ENCODE measurements at regions of chr12 and their contacts with region 1.

Region 1: GRCh38 chr12:47686645-47687240 is 19.1 kb downstream of the RPAP3 start:
- DNase-seq: peak; percentile 55
- ATAC-seq: no peak
- H3K4me3 ChIP-seq: no peak overlapping the region
- H3K27ac ChIP-seq: no peak overlapping the region
- H3K4me1 ChIP-seq: no peaks in the 10 kb centered on the region
- H3K27me3 ChIP-seq: no peaks in the 10 kb centered on the region
- CTCF ChIP-seq: peak; percentile 72

Region 2: GRCh38 chr12:47547085-47547484 is 139.7 kb before region 1 on chr12:
- CTCF ChIA-PET with region 1: interaction called, 3 read pairs
- POLR2A ChIA-PET with region 1: no interaction called
- intact Hi-C with region 1: loop called (anchors 1 kb)
- DNase-seq: peak; percentile 70
- ATAC-seq: peak; percentile 73
- H3K4me3 ChIP-seq: no peak overlapping the region
- H3K27ac ChIP-seq: no peak overlapping the region
- H3K4me1 ChIP-seq: peaks cover 8% of the 10 kb centered on the region; the same call in 1 of the 2 replicates
- H3K27me3 ChIP-seq: peaks cover 18% of the 10 kb centered on the region
- CTCF ChIP-seq: peak; percentile 77

Region 3: GRCh38 chr12:47651368-47652254 is 35.1 kb before region 1 on chr12:
- CTCF ChIA-PET with region 1: interaction called, 10 read pairs
- POLR2A ChIA-PET with region 1: no interaction called
- intact Hi-C with region 1: loop called (anchors 1 kb)
- DNase-seq: peak; percentile 82
- ATAC-seq: peak; percentile 79
- H3K4me3 ChIP-seq: peak overlapping the region; percentile 61
- H3K27ac ChIP-seq: no peak overlapping the region
- H3K4me1 ChIP-seq: peaks cover 15% of the 10 kb centered on the region
- H3K27me3 ChIP-seq: no peaks in the 10 kb centered on the region
- CTCF ChIP-seq: peak; percentile 71

Region 4: DNA sequence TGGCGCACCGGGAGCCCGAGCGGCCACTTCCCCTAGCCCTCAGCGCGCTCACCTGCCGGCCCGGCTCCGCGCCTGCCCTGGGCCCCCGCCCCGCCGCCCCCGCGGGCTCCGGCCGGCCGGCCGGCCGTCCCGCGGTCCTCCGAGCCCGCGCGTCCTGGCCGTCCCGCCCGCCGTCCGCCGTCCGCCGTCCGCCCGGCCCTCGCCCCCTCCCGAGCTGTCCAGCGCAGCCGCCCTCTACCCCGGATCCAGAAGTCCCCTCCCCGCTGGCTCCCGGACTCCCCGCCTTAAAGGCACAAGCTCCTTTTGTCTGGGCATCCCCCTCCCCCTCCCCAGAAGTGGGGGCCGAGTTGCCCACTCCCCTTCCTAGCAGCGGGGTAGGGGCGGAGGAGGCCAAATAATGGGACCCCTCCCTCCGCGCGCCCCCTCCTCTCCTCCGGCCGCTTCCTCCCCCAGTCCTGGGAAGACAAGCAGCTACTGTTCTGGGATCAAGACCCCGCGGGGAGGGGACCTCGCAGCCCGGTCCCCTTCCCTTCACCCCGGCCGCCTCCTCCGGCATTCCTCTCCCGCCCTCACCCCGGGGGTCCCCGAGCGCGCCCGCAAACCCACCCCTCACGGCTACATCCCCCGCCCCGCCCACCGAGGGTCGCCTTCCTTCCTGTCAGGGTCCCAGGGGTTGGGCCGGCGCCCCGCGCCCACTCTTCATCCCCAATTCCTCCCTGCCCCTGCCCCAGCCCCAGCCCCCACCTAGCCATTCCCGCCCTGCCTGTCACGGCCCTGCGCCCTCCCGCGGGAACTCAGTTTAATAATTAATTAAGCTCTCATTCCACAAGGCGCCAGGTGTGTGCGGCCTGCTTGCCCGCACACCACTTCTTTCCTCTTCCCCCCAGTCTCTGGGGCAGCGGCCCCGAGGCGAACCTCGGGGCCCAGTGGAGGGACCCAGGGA is 1102.4 kb after region 1 on chr12 and contains the start of gene ADCY6:
- CTCF ChIA-PET with region 1: no interaction called
- POLR2A ChIA-PET with region 1: interaction called, 10 read pairs
- intact Hi-C with region 1: no loop called
- DNase-seq: peak; percentile 72
- ATAC-seq: peak; percentile 88
- H3K4me3 ChIP-seq: peak within 1 kb of the TSS; percentile 99
- H3K27ac ChIP-seq: no peak within 1 kb of the TSS
- H3K4me1 ChIP-seq: peaks cover 16% of the 10 kb centered on the region
- H3K27me3 ChIP-seq: no peaks in the 10 kb centered on the region
- CTCF ChIP-seq: no peak
- total RNA-seq, gene ADCY6: 19.0 and 24.4 TPM in 2 replicates